PC-3 (cell line): ENCODE measurements at regions of chr10 and their contacts with region 1.

Region 1: DNA sequence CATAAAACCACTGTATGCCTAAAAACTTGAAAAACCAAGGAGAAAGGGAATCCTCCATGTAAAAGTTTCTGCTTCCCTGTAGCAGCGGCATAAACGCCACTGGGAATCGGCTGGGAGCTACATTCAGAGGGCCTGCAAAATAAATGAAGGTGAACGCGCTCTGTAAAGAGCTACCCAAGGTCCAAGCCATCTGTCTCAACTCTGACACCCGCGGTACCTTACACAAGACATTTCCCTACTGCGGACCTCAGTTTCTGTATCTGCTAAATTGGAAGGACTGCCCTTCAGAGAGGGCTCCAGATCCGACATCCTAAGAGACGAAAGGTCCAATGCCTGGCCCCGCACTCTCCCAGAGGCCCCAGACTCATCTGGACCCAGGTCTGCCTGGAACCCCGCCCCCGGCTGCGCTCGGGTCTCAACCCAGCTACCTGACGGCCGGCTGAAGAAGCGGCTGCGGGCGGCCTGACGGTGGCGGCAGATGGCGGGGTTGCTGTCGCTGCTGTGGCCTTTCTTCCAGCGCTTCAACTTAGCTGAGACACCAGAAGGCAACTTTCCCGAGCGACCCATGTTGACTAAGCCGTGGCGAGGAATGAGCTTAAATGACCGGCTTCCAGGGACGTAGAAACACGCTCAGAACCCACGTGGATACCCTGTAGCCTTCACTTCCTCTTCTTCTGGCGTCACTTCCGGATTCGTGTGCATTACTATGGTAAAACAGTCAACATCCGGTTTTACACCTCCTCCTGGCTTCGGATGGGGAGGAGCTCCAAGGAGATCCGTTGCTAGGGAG is at the start of gene RRP12:
- DNase-seq: peak; percentile 97
- ATAC-seq: peak; percentile 90
- H3K4me3 ChIP-seq: peak within 1 kb of the TSS; percentile 99
- H3K27ac ChIP-seq: peak within 1 kb of the TSS; percentile 80
- H3K4me1 ChIP-seq: peaks cover 4% of the 10 kb centered on the region; the same call in 1 of the 2 replicates
- H3K27me3 ChIP-seq: no peaks in the 10 kb centered on the region
- CTCF ChIP-seq: no peak
- total RNA-seq, gene RRP12: 34.4 and 44.2 TPM in 2 replicates

Region 2: GRCh38 chr10:97292097-97292862 is 108.6 kb before region 1 on chr10 and contains the start of gene ARHGAP19:
- CTCF ChIA-PET with region 1: no interaction called
- POLR2A ChIA-PET with region 1: interaction called, 5 read pairs
- intact Hi-C with region 1: loop called (anchors 1 kb)
- DNase-seq: peak; percentile 96
- ATAC-seq: peak; percentile 93
- H3K4me3 ChIP-seq: peak within 1 kb of the TSS; percentile 86
- H3K27ac ChIP-seq: peak within 1 kb of the TSS; percentile 92
- H3K4me1 ChIP-seq: no peaks in the 10 kb centered on the region; the same call in 1 of the 2 replicates
- H3K27me3 ChIP-seq: no peaks in the 10 kb centered on the region
- CTCF ChIP-seq: peak; percentile 30; the same call in 1 of the 2 replicates
- total RNA-seq, gene ARHGAP19: 8.5 and 9.8 TPM in 2 replicates

Region 3: GRCh38 chr10:97376413-97376812 is 24.4 kb before region 1 on chr10:
- CTCF ChIA-PET with region 1: interaction called, 10 read pairs
- POLR2A ChIA-PET with region 1: no interaction called
- intact Hi-C with region 1: no loop called
- DNase-seq: no peak
- ATAC-seq: no peak
- H3K4me3 ChIP-seq: no peak overlapping the region
- H3K27ac ChIP-seq: no peak overlapping the region
- H3K4me1 ChIP-seq: no peaks in the 10 kb centered on the region
- H3K27me3 ChIP-seq: no peaks in the 10 kb centered on the region
- CTCF ChIP-seq: no peak

Region 4: GRCh38 chr10:97425964-97426775 is 25.3 kb after region 1 on chr10 and contains the start of gene PGAM1:
- CTCF ChIA-PET with region 1: interaction called, 10 read pairs
- POLR2A ChIA-PET with region 1: no interaction called
- intact Hi-C with region 1: loop called (anchors 2 kb)
- DNase-seq: peak; percentile 94
- ATAC-seq: peak; percentile 84
- H3K4me3 ChIP-seq: peak within 1 kb of the TSS; percentile 96
- H3K27ac ChIP-seq: peak within 1 kb of the TSS; percentile 33
- H3K4me1 ChIP-seq: peaks cover 15% of the 10 kb centered on the region
- H3K27me3 ChIP-seq: no peaks in the 10 kb centered on the region
- CTCF ChIP-seq: peak; percentile 50
- total RNA-seq, gene PGAM1: 591 and 661 TPM in 2 replicates